PC-3 (cell line): ENCODE measurements at regions of chr3 and their contacts with region 1.

Region 1: GRCh38 chr3:45841757-45842491 is at the start of gene LZTFL1:
- DNase-seq: peak; percentile 98
- ATAC-seq: peak; percentile 82
- H3K4me3 ChIP-seq: peak within 1 kb of the TSS; percentile 97
- H3K27ac ChIP-seq: peak within 1 kb of the TSS; percentile 39
- H3K4me1 ChIP-seq: peaks cover 25% of the 10 kb centered on the region
- H3K27me3 ChIP-seq: peaks cover 3% of the 10 kb centered on the region; the same call in 1 of the 2 replicates
- CTCF ChIP-seq: no peak
- total RNA-seq, gene LZTFL1: 8.3 and 14.2 TPM in 2 replicates

Region 2: GRCh38 chr3:45817831-45818522 is 23.9 kb before region 1 on chr3:
- CTCF ChIA-PET with region 1: no interaction called
- POLR2A ChIA-PET with region 1: interaction called, 3 read pairs
- intact Hi-C with region 1: loop called (anchors 2 kb)
- DNase-seq: peak; percentile 97
- ATAC-seq: peak; percentile 74
- H3K4me3 ChIP-seq: no peak overlapping the region; the same call in 1 of the 2 replicates
- H3K27ac ChIP-seq: peak overlapping the region; percentile 85
- H3K4me1 ChIP-seq: peaks cover 40% of the 10 kb centered on the region
- H3K27me3 ChIP-seq: no peaks in the 10 kb centered on the region
- CTCF ChIP-seq: no peak

Region 3: GRCh38 chr3:45868214-45868613 is 26.3 kb after region 1 on chr3:
- CTCF ChIA-PET with region 1: interaction called, 6 read pairs
- POLR2A ChIA-PET with region 1: no interaction called
- intact Hi-C with region 1: loop called (anchors 1 kb)
- DNase-seq: peak; percentile 89
- ATAC-seq: peak; percentile 96
- H3K4me3 ChIP-seq: no peak overlapping the region
- H3K27ac ChIP-seq: peak overlapping the region; percentile 21; the same call in 1 of the 2 replicates
- H3K4me1 ChIP-seq: peaks cover 10% of the 10 kb centered on the region
- H3K27me3 ChIP-seq: no peaks in the 10 kb centered on the region
- CTCF ChIP-seq: no peak

Region 4: DNA sequence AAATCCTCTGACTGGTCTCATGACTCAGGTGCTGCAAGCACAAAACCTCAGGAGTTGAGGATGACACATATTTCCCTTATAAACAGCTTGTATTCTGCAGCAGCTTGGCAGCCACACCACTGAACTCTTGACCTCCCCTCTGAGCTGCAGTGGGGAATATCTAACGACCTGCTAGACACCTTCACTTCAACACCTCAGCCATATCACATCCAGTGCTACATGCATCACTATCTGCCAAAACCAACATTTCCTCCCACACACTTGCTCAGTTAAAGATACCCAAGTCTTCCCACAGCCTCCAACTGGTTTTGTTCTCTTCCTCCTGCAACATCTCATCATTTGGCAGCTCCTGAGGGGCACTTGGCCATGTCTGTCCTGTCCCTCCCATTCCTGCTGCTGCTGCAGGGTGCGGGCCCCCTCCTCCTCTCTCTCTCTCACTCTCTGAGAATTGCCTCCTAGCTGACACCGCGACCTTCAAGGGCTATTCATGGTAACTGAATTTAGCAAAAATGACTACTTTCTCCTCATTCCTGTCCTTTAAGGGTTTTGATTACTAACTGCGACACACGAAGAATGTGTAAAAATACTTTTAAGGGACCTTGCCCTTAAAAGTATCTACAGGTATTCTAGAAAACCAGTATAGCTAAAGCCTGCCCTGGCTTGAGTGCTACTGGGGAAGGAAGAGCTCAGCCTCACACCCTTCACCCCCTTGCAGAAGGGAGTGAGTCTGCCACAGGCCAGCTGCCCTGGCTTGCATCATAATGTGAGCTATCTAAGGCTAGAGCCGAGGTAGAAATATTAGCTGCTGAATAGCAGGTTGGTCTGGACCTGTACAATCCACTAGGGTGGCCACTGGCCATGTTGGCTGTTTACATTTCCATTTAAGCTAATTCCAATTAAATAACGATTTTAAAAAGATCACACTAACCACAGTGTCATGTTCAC is 39.4 kb after region 1 on chr3:
- CTCF ChIA-PET with region 1: no interaction called
- POLR2A ChIA-PET with region 1: interaction called, 8 read pairs
- intact Hi-C with region 1: loop called (anchors 5 kb)
- DNase-seq: peak; percentile 88
- ATAC-seq: peak; percentile 93
- H3K4me3 ChIP-seq: no peak overlapping the region
- H3K27ac ChIP-seq: peak overlapping the region; percentile 72
- H3K4me1 ChIP-seq: peaks cover 21% of the 10 kb centered on the region
- H3K27me3 ChIP-seq: no peaks in the 10 kb centered on the region
- CTCF ChIP-seq: no peak

Region 5: DNA sequence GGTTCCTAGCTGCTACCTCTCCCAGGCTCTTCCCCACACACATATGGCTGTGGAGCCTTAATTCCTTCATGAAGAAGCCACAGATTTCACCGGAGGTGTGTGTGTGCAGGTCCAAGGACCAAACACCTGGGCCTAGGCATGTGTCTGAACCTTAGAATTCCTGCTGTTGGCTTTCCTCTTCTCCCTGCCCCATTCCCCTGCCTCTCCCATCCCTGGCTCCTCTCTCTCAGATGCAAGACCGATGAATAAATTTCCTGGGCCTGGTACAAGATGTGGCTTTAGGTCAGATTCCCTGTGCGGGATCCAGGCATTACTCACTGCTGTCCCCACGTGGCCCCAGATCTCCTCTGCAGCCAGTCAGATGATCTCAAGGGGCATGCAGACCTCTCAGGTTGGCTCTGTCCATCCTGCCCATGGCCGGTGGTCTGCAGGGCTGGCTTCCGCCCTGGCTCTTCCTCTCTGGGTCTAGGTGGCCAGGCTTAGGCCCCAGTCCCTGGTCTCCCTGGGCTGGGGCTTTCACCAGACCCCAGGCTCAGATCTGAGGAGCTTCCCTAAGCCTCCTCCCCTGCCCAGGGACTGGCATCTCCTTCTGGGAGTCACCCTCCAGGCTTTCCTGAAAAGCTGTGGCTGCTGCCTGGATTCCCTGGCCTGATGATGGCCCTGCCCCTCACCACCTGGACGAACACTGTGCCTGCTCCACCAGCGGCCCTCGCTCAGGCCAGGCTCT is 64.9 kb after region 1 on chr3:
- CTCF ChIA-PET with region 1: no interaction called
- POLR2A ChIA-PET with region 1: no interaction called
- intact Hi-C with region 1: loop called (anchors 1 kb)
- DNase-seq: peak; percentile 63
- ATAC-seq: peak; percentile 95
- H3K4me3 ChIP-seq: no peak overlapping the region
- H3K27ac ChIP-seq: no peak overlapping the region
- H3K4me1 ChIP-seq: no peaks in the 10 kb centered on the region
- H3K27me3 ChIP-seq: no peaks in the 10 kb centered on the region
- CTCF ChIP-seq: peak; percentile 83

Region 6: GRCh38 chr3:45929042-45929679 is 87.2 kb after region 1 on chr3:
- CTCF ChIA-PET with region 1: no interaction called
- POLR2A ChIA-PET with region 1: no interaction called
- intact Hi-C with region 1: loop called (anchors 1 kb)
- DNase-seq: peak; percentile 69
- ATAC-seq: peak; percentile 94
- H3K4me3 ChIP-seq: no peak overlapping the region
- H3K27ac ChIP-seq: no peak overlapping the region
- H3K4me1 ChIP-seq: no peaks in the 10 kb centered on the region
- H3K27me3 ChIP-seq: no peaks in the 10 kb centered on the region
- CTCF ChIP-seq: peak; percentile 92

Region 7: DNA sequence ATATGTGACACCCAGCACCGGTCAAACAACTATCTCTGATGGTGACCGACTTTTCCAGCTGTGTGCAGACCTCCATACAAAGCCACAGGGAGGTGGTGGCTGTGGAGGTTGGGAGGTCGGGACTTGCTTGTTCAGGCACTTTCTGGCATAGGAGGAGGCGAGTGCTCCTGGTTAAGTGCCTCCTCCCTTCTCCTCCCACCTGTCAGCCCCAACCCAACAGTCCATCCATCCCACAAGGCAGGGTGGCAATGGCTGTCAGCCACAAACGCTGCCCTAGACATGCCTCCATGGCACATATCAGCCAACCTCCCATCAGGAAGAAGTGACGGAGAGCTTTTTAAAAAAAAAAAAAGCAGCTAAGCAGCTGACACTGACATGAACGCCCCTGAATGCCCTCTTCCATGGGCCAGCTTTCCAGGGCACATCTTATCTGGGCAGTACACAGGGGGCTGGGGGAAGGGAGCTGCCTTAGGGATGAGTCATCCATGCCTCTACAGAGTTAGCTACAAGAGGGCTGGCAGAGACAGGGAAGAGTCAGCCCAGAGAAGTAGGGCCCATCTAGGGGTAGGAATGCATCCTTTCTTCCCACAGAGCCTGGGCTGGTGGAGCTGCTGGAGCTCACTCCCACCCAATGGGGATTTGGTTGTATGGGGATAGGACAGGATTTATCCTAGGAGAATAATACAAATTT is 1093.4 kb after region 1 on chr3:
- CTCF ChIA-PET with region 1: no interaction called
- POLR2A ChIA-PET with region 1: no interaction called
- intact Hi-C with region 1: no loop called
- DNase-seq: peak; percentile 93
- ATAC-seq: peak; percentile 84
- H3K4me3 ChIP-seq: 0 out of 2 replicates have a peak overlapping the region, but pooled peaks have one; percentile 32
- H3K27ac ChIP-seq: peak overlapping the region; percentile 96
- H3K4me1 ChIP-seq: peaks cover 65% of the 10 kb centered on the region
- H3K27me3 ChIP-seq: no peaks in the 10 kb centered on the region
- CTCF ChIP-seq: peak; percentile 56

Region 8: GRCh38 chr3:47455806-47456452 is 1614.0 kb after region 1 on chr3:
- CTCF ChIA-PET with region 1: no interaction called
- POLR2A ChIA-PET with region 1: no interaction called
- intact Hi-C with region 1: no loop called
- DNase-seq: no peak
- ATAC-seq: no peak
- H3K4me3 ChIP-seq: no peak overlapping the region
- H3K27ac ChIP-seq: no peak overlapping the region
- H3K4me1 ChIP-seq: no peaks in the 10 kb centered on the region
- H3K27me3 ChIP-seq: no peaks in the 10 kb centered on the region
- CTCF ChIP-seq: no peak